ENCODE measurements at regions of chr12 and their contacts with region 1.

Region 1: GRCh38 chr12:54032627-54033100 is at the start of gene HOXC5:
- DNase-seq: peak; percentile 87 to 92
- ATAC-seq: peak; percentile 40 to 59
- H3K4me3 ChIP-seq: peak within 1 kb of the TSS; percentile 56
- H3K27ac ChIP-seq: peak within 1 kb of the TSS; percentile 76 to 93
- H3K4me1 ChIP-seq: peaks cover 18% of the 10 kb centered on the region
- CTCF ChIP-seq: peak; percentile 98
- EP300 ChIP-seq: no peak
- POLR2A ChIP-seq: no peak
- RAD21 ChIP-seq: peak; percentile 92 to 94
- polyA plus RNA-seq, gene HOXC5: 0.41 and 0.49 TPM in 2 replicates

Region 2: DNA sequence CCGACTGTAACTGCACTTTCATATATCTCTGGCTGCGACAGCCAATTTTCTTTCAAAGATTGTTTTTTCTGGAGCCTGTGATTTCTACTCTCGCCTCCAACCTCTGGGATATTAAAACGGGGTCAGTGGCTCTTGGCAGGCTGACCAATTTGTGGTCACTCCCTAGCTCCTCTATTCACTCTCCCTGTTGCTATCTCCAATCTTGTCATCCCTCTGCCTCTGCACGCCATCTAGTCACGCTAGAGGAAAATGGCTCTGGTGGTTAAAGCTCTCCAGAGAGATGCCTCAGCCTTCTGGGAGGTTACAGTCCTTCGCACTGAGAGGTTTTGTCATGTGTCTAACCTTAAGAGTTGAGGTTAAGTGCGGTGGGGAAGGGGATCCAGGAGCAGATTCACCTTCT is 221.1 kb before region 1 on chr12:
- CTCF ChIA-PET with region 1: no interaction called
- POLR2A ChIA-PET with region 1: no interaction called
- DNase-seq: no peak
- ATAC-seq: no peak; a peak in 1 of 6 replicates
- H3K4me3 ChIP-seq: no peak overlapping the region
- H3K27ac ChIP-seq: no peak overlapping the region
- H3K4me1 ChIP-seq: peaks cover 6% of the 10 kb centered on the region; the same call in 2 of the 3 replicates
- CTCF ChIP-seq: no peak
- EP300 ChIP-seq: no peak
- POLR2A ChIP-seq: no peak
- RAD21 ChIP-seq: no peak

Region 3: DNA sequence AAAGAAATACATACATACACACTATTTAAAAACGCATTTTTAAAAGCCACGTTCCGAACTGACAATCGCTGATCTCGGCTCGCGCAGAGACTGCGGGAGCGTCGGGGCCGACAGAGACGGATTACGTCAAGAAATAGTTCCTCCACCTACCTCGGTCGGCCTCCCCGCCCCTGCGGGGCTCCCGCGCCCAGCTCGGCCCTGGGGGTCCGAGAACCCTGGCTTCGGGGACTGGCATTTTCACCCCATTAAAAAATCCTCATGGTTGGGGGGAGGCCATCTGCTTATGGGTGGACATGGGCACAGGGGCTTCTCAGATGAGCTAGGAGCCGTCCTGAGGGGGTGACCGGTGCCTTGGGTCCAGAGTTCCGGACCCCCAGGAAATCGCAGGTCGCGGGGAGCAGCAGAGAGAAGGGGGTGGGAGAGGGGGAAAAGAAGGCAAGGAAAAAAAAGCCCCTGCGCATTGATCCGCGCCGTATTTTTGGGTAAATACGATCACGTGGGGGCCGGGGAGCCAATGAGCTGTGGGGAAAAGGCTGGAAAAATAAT is 33.0 kb before region 1 on chr12:
- CTCF ChIA-PET with region 1: interaction called, 66 read pairs
- POLR2A ChIA-PET with region 1: no interaction called
- DNase-seq: peak; percentile 82 to 92
- ATAC-seq: peak; percentile 30 to 64; a peak in 5 of 6 replicates
- H3K4me3 ChIP-seq: peak overlapping the region; percentile 83
- H3K27ac ChIP-seq: peak overlapping the region; percentile 93 to 96
- H3K4me1 ChIP-seq: peaks cover 14% of the 10 kb centered on the region
- CTCF ChIP-seq: no peak
- EP300 ChIP-seq: no peak
- POLR2A ChIP-seq: no peak
- RAD21 ChIP-seq: no peak

Region 4: GRCh38 chr12:54017878-54018467 is 14.7 kb before region 1 on chr12:
- CTCF ChIA-PET with region 1: interaction called, 71 read pairs
- POLR2A ChIA-PET with region 1: interaction called, 26 read pairs
- DNase-seq: peak; percentile 92 to 93
- ATAC-seq: peak; percentile 70 to 79
- H3K4me3 ChIP-seq: peak overlapping the region; percentile 61
- H3K27ac ChIP-seq: peak overlapping the region; percentile 96 to 99
- H3K4me1 ChIP-seq: peaks cover 48% of the 10 kb centered on the region
- CTCF ChIP-seq: no peak
- EP300 ChIP-seq: no peak
- POLR2A ChIP-seq: peak; percentile 40
- RAD21 ChIP-seq: no peak

Region 5: GRCh38 chr12:54053751-54054741 is 21.4 kb after region 1 on chr12 and contains the start of gene HOXC4:
- CTCF ChIA-PET with region 1: interaction called, 41 read pairs
- POLR2A ChIA-PET with region 1: interaction called, 8 read pairs
- DNase-seq: peak; percentile 63 to 82
- ATAC-seq: peak; percentile 82 to 93
- H3K4me3 ChIP-seq: peak within 1 kb of the TSS; percentile 67
- H3K27ac ChIP-seq: peak within 1 kb of the TSS; percentile 90 to 94
- H3K4me1 ChIP-seq: peaks cover 17% of the 10 kb centered on the region
- CTCF ChIP-seq: no peak
- EP300 ChIP-seq: no peak
- POLR2A ChIP-seq: no peak; the same call in 1 of the 2 replicates
- RAD21 ChIP-seq: no peak
- polyA plus RNA-seq, gene HOXC4: 1.3 and 1.5 TPM in 2 replicates

Region 6: GRCh38 chr12:54191550-54192022 is 158.9 kb after region 1 on chr12:
- CTCF ChIA-PET with region 1: interaction called, 476 read pairs
- POLR2A ChIA-PET with region 1: interaction called, 8 read pairs
- DNase-seq: peak; percentile 87 to 92
- ATAC-seq: peak; percentile 71 to 84
- H3K4me3 ChIP-seq: no peak overlapping the region
- H3K27ac ChIP-seq: peak overlapping the region; percentile 10 to 70; a peak in 3 of 6 replicates
- H3K4me1 ChIP-seq: peaks cover 25% of the 10 kb centered on the region
- CTCF ChIP-seq: peak; percentile 79
- EP300 ChIP-seq: no peak
- POLR2A ChIP-seq: no peak
- RAD21 ChIP-seq: peak; percentile 90 to 92

Measured in A549 (cell line).